ENCODE measurements at regions of chr15 and their contacts with region 1.

Region 1: GRCh38 chr15:65818927-65819562 is 27.0 kb upstream of the DENND4A start:
- DNase-seq: peak; percentile 78
- ATAC-seq: peak; percentile 78
- H3K4me3 ChIP-seq: no peak overlapping the region
- H3K27ac ChIP-seq: peak overlapping the region; percentile 56
- H3K4me1 ChIP-seq: peaks cover 62% of the 10 kb centered on the region
- H3K27me3 ChIP-seq: no peaks in the 10 kb centered on the region
- CTCF ChIP-seq: no peak
- EP300 ChIP-seq: peak; percentile 100
- POLR2A ChIP-seq: no peak
- RAD21 ChIP-seq: no peak

Region 2: GRCh38 chr15:65761210-65761926 is 57.7 kb before region 1 on chr15:
- CTCF ChIA-PET with region 1: interaction called, 4 read pairs
- POLR2A ChIA-PET with region 1: interaction called, 5 read pairs
- RAD21 ChIA-PET with region 1: interaction called, 3 read pairs
- SMC1A ChIA-PET with region 1: interaction called, 11 read pairs
- in situ Hi-C with region 1: no loop called
- intact Hi-C with region 1: no loop called
- DNase-seq: no peak
- ATAC-seq: peak; percentile 53
- H3K4me3 ChIP-seq: peak overlapping the region; percentile 37
- H3K27ac ChIP-seq: peak overlapping the region; percentile 74
- H3K4me1 ChIP-seq: peaks cover 31% of the 10 kb centered on the region
- H3K27me3 ChIP-seq: no peaks in the 10 kb centered on the region
- CTCF ChIP-seq: no peak
- EP300 ChIP-seq: peak in 1 of 2 experiments; percentile 45; a peak in 1 of 4 replicates
- POLR2A ChIP-seq: no peak
- RAD21 ChIP-seq: no peak

Region 3: GRCh38 chr15:65804252-65804931 is 14.7 kb before region 1 on chr15:
- CTCF ChIA-PET with region 1: interaction called, 155 read pairs
- POLR2A ChIA-PET with region 1: interaction called, 260 read pairs
- RAD21 ChIA-PET with region 1: interaction called, 344 read pairs
- SMC1A ChIA-PET with region 1: interaction called, 488 read pairs
- in situ Hi-C with region 1: no loop called
- intact Hi-C with region 1: no loop called
- DNase-seq: no peak
- ATAC-seq: peak; percentile 40
- H3K4me3 ChIP-seq: no peak overlapping the region
- H3K27ac ChIP-seq: peak overlapping the region; percentile 10; the same call in 1 of the 2 replicates
- H3K4me1 ChIP-seq: peaks cover 27% of the 10 kb centered on the region
- H3K27me3 ChIP-seq: no peaks in the 10 kb centered on the region
- CTCF ChIP-seq: no peak
- EP300 ChIP-seq: no peak
- POLR2A ChIP-seq: no peak
- RAD21 ChIP-seq: no peak

Region 4: GRCh38 chr15:66212563-66212921 is 393.5 kb after region 1 on chr15:
- CTCF ChIA-PET with region 1: no interaction called
- POLR2A ChIA-PET with region 1: no interaction called
- RAD21 ChIA-PET with region 1: no interaction called
- SMC1A ChIA-PET with region 1: no interaction called
- in situ Hi-C with region 1: no loop called
- intact Hi-C with region 1: no loop called
- DNase-seq: no peak
- ATAC-seq: no peak; the same call in 1 of the 3 replicates
- H3K4me3 ChIP-seq: no peak overlapping the region
- H3K27ac ChIP-seq: no peak overlapping the region
- H3K4me1 ChIP-seq: no peaks in the 10 kb centered on the region
- H3K27me3 ChIP-seq: no peaks in the 10 kb centered on the region; a peak in 2 of 4 replicates
- CTCF ChIP-seq: no peak
- EP300 ChIP-seq: no peak
- POLR2A ChIP-seq: no peak
- RAD21 ChIP-seq: no peak